Cardiac septum (tissue), 1 donor: ENCODE measurements at regions of chr2 and their contacts with region 1.

Region 1: DNA sequence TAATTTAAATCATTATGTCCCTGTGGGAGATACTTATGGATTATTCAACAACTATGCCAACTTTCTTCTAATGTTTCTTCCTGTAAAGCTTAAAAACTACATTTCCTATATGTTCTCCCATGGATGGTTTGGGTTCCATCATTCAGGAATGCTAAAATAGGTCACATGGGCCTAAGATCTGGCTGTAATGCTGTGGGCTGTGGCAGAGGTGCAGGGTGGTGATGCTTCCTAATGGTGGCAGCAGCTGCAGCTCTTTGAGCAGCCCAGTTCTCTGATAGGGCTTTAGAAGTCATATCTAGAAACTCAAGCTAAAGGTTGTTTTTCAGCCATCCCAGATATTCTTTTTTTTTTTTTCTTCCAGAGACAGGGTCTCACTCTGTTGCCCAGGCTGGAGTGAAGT is 266.1 kb downstream of the ZNF385B start:
- DNase-seq: no peak

Region 2: GRCh38 chr2:179422037-179422643 is 173.1 kb before region 1 on chr2:
- intact Hi-C with region 1: loop called (anchors 10 kb)
- DNase-seq: no peak

Region 3: GRCh38 chr2:179661986-179662385 is 66.7 kb after region 1 on chr2:
- intact Hi-C with region 1: no loop called
- DNase-seq: no peak

Region 4: GRCh38 chr2:179677077-179677688 is 81.9 kb after region 1 on chr2:
- intact Hi-C with region 1: loop called (anchors 5 kb)
- DNase-seq: no peak

Region 5: GRCh38 chr2:179692610-179693009 is 97.3 kb after region 1 on chr2:
- intact Hi-C with region 1: no loop called
- DNase-seq: no peak

Region 6: DNA sequence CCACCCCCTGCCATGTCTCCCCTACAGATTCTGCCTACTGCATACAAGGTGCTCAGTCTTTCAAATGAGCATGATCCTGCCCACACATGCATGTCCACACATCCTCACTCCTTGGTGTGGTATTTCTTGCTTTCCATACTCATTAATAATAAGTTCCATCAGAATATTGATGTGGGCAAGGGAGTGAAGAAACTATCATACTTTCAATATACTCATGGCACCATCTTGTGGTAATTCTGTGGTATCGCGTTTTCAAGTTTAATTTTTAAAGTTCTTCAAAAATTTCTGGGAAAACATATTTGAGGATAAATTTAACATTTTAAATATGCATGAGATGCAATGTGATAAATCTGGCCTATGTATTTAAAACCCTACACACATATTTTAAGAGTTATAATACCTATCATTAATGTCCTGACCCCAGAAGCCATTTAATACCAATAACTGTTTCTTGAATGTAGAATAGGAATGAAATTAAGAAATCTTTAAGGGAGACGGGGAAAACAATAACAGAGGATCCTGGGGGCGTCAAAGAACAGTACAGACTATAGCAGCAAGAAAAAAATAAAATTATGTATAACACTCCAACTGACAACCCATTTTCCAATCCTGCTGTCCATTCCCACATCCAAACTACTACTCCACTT is 156.0 kb after region 1 on chr2:
- intact Hi-C with region 1: loop called (anchors 5 kb)
- DNase-seq: no peak